OCI-LY7 (cell line): ENCODE measurements at regions of chr4 and their contacts with region 1.

Region 1: GRCh38 chr4:41207305-41207831 is 7.0 kb downstream of the APBB2 start:
- DNase-seq: no peak
- H3K4me3 ChIP-seq: no peak overlapping the region
- H3K27ac ChIP-seq: no peak overlapping the region
- H3K4me1 ChIP-seq: peaks cover 28% of the 10 kb centered on the region
- CTCF ChIP-seq: no peak

Region 2: DNA sequence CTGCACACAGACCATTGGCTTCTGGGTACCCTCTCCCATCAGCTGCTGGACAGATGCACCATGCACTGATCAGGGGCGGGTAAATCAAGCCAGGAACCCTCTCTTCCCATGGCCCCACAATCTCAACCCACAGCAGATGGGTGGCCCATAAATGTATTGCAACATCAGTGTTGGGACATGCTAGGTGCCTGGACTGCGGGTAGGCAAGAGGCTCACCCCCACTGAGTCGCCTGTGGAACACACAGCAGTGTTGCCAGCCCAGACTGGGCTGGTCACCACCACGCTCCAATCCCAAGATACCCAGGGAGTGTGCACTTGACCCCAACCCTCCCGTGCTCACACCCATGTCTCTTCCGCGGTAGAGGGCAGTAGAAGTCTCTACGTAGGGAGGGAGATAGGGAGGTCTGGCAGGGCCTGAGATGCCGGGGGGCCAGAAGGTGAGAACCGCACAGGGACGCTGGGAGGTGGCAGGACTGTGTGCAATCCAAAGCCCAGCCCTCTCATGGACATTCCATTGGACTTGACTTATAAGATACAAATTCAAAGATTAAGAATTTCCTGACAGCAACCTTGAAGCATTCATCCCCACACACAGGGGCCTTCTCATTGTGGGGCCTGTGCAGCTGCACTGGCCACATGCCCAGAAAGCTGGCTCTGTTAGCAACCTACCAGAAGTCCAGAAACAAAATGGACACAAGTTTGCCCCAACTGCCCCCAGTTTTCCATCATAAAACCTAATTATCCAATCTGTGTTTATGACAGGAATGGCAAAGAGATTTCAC is 273.9 kb before region 1 on chr4:
- CTCF ChIA-PET with region 1: no interaction called
- POLR2A ChIA-PET with region 1: interaction called, 10 read pairs
- intact Hi-C with region 1: no loop called
- DNase-seq: no peak
- H3K4me3 ChIP-seq: no peak overlapping the region
- H3K27ac ChIP-seq: no peak overlapping the region
- H3K4me1 ChIP-seq: no peaks in the 10 kb centered on the region
- CTCF ChIP-seq: no peak